Naive thymus-derived CD4-positive, alpha-beta T cell (primary cell): ENCODE measurements at regions of chr17 and their contacts with region 1.

Region 1: GRCh38 chr17:29568331-29569244 is at the start of gene TP53I13:
- DNase-seq: peak; percentile 65 to 90 (median 81)
- ATAC-seq: peak; percentile 81
- H3K4me3 ChIP-seq: peak within 1 kb of the TSS; percentile 89
- H3K4me3 Mint-ChIP-seq: peak within 1 kb of the TSS; percentile 88 to 99 (median 95)
- H3K27ac ChIP-seq: peak within 1 kb of the TSS; percentile 78
- H3K27ac Mint-ChIP-seq: peak within 1 kb of the TSS; percentile 82 to 97 (median 92)
- H3K4me1 ChIP-seq: peaks cover 12 to 30% of the 10 kb centered on the region in 2 donors
- H3K4me1 Mint-ChIP-seq: peaks cover 21 to 42% (median 32%) of the 10 kb centered on the region in 7 donors
- H3K27me3 ChIP-seq: no peaks in the 10 kb centered on the region
- H3K27me3 Mint-ChIP-seq: no peaks in the 10 kb centered on the region
- total RNA-seq, gene TP53I13: 61.6 to 87.5 (median 62.8) TPM

Region 2: DNA sequence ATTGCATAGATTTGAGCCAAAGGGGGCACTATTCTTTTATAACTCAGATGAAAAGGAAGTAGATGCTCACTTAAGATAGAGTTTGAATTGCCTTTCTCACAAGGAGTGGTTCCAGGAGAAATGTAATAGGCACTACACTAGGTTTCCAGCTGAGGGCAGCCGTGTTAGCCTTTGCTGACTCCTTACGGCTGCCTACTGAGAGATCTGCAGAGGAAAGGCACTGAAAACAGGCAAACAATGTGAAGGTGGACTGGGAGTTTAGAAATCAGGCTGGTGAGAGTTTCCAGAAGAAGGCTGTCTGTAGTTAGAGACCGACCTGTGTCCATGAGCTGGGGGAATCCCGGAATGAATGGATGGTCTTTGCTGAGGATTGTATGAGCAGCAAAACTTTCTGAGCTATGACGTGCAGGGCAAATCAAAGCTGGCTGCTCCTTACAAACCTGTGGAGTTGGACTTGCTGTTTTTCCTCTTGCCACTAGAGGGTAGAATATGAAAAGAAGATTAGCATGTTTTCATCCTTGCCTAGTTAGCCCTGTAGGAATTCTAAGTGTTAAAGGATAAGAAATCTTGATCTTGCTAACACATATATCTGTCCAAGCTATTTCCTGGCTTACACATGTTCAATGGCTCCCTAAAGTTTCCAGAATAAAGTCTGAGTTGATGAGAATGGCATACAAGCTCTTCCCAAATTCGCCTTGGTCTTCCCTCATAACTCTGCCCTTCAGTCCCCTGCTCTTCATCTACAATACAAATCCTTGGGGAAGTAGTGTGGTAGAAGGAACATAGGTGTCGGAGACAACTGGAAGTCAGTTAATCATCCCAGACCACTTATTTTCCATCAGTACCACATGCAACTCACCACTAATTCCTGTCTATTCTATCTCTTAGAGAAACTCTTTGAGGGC is 198.5 kb before region 1 on chr17:
- CTCF ChIA-PET with region 1: interaction called, 9 read pairs
- POLR2A ChIA-PET with region 1: no interaction called
- intact Hi-C with region 1: loop called (anchors 1 kb)
- DNase-seq: peak; percentile 25 to 80 (median 67)
- ATAC-seq: peak; percentile 95
- H3K4me3 ChIP-seq: no peak overlapping the region
- H3K4me3 Mint-ChIP-seq: no peak overlapping the region
- H3K27ac ChIP-seq: peak overlapping the region; percentile 63
- H3K27ac Mint-ChIP-seq: no peak overlapping the region
- H3K4me1 ChIP-seq: no peaks in the 10 kb centered on the region
- H3K4me1 Mint-ChIP-seq: no peaks in the 10 kb centered on the region
- H3K27me3 ChIP-seq: no peaks in the 10 kb centered on the region
- H3K27me3 Mint-ChIP-seq: peaks cover 0 to 2% (median 0%) of the 10 kb centered on the region in 5 donors

Region 3: GRCh38 chr17:29389982-29390850 is 178.4 kb before region 1 on chr17 and contains the start of gene TAOK1:
- CTCF ChIA-PET with region 1: no interaction called
- POLR2A ChIA-PET with region 1: interaction called, 4 read pairs
- intact Hi-C with region 1: loop called (anchors 1 kb)
- DNase-seq: peak; percentile 93 to 98 (median 96)
- ATAC-seq: peak; percentile 97
- H3K4me3 ChIP-seq: peak within 1 kb of the TSS; percentile 94
- H3K4me3 Mint-ChIP-seq: peak within 1 kb of the TSS; percentile 95 to 99 (median 98)
- H3K27ac ChIP-seq: peak within 1 kb of the TSS; percentile 98
- H3K27ac Mint-ChIP-seq: peak within 1 kb of the TSS; percentile 92 to 98 (median 97)
- H3K4me1 ChIP-seq: peaks cover 14 to 25% of the 10 kb centered on the region in 2 donors
- H3K4me1 Mint-ChIP-seq: peaks cover 36 to 49% (median 44%) of the 10 kb centered on the region in 7 donors
- H3K27me3 ChIP-seq: no peaks in the 10 kb centered on the region
- H3K27me3 Mint-ChIP-seq: peaks cover 0 to 2% (median 0%) of the 10 kb centered on the region in 5 donors
- total RNA-seq, gene TAOK1: 62.4 to 70.1 (median 66.5) TPM

Region 4: DNA sequence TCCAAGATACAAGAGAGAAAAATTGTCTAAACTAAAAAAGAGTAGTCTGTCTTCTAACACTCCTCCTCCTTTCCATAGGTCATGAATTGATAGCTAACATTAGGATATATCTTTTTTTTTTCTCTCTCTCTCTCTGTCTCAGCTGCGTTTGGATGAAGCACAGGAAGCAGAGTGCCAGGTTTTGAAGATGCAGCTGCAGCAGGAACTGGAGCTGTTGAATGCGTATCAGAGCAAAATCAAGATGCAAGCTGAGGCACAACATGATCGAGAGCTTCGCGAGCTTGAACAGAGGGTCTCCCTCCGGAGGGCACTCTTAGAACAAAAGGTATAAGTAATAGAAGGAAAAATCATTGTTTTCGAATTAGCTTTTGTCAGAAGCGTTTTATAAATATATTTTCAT is 34.6 kb before region 1 on chr17:
- CTCF ChIA-PET with region 1: interaction called, 4 read pairs
- POLR2A ChIA-PET with region 1: no interaction called
- intact Hi-C with region 1: loop called in 1 of 2 experiments (anchors 2 kb)
- DNase-seq: no peak
- ATAC-seq: no peak
- H3K4me3 ChIP-seq: no peak overlapping the region
- H3K4me3 Mint-ChIP-seq: no peak overlapping the region
- H3K27ac ChIP-seq: no peak overlapping the region
- H3K27ac Mint-ChIP-seq: peak overlapping the region in 2 of 9 donors; percentile 14 to 36
- H3K4me1 ChIP-seq: no peaks in the 10 kb centered on the region
- H3K4me1 Mint-ChIP-seq: no peaks in the 10 kb centered on the region
- H3K27me3 ChIP-seq: no peaks in the 10 kb centered on the region
- H3K27me3 Mint-ChIP-seq: no peaks in the 10 kb centered on the region

Region 5: DNA sequence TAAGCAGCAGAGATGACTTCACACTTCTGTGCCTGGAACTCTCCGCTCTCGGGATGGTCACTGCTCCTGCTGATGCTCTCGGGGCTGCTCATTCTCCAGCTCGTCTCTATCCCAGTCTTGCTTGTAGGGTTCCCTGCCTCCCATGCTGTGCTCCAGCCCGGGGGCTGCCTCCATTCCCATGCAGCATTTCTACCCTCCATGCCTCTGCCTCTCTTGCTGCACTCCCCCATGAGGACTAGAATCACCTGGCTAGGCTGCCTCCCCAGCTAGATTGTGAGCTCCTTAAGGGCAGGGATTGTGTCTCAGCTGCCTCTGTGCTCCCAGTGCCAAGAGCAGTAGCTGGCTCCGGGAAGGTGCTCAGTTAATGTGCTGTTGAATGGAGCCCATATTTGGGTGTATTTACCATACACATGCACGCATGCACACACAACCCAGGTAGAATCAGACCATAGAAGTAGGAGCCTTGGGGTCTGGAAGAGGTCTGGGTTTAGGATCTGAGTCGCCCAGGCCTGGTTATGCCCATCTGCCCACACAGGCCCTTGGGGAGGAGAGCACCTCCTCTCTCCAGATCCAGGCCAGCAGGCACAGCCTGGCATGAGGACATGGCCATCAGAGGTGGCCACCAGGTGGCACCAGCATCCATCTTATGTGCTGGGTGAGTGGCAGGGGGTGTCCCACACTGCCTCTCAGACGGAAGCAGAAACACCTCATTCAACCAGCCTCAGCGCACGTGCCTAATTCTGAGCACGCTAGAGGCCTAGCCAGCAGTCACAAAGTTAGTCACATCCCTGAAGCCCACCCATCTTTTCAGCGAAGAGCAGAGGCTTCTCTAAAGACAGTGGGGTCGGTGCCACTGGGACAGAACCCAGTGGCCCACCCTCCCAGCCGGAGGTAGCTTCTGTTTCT is 11.5 kb after region 1 on chr17:
- CTCF ChIA-PET with region 1: interaction called, 12 read pairs
- POLR2A ChIA-PET with region 1: interaction called, 8 read pairs
- intact Hi-C with region 1: loop called in 1 of 2 experiments (anchors 1 kb)
- DNase-seq: peak; percentile 79 to 90 (median 87)
- ATAC-seq: peak; percentile 99
- H3K4me3 ChIP-seq: no peak overlapping the region
- H3K4me3 Mint-ChIP-seq: peak overlapping the region in 2 of 10 donors; percentile 2 to 32
- H3K27ac ChIP-seq: peak overlapping the region; percentile 53
- H3K27ac Mint-ChIP-seq: peak overlapping the region; percentile 7 to 96 (median 81)
- H3K4me1 ChIP-seq: peaks cover 2 to 17% of the 10 kb centered on the region in 2 donors
- H3K4me1 Mint-ChIP-seq: peaks cover 21 to 24% (median 22%) of the 10 kb centered on the region in 7 donors
- H3K27me3 ChIP-seq: no peaks in the 10 kb centered on the region
- H3K27me3 Mint-ChIP-seq: no peaks in the 10 kb centered on the region

Region 6: GRCh38 chr17:29589524-29590410 is 21.2 kb after region 1 on chr17 and contains the start of gene GIT1:
- CTCF ChIA-PET with region 1: interaction called, 6 read pairs
- POLR2A ChIA-PET with region 1: interaction called, 12 read pairs
- intact Hi-C with region 1: loop called (anchors 1 kb)
- DNase-seq: peak; percentile 77 to 88 (median 84)
- ATAC-seq: peak; percentile 93
- H3K4me3 ChIP-seq: peak within 1 kb of the TSS; percentile 72
- H3K4me3 Mint-ChIP-seq: peak within 1 kb of the TSS; percentile 88 to 96 (median 94)
- H3K27ac ChIP-seq: peak within 1 kb of the TSS; percentile 75
- H3K27ac Mint-ChIP-seq: peak within 1 kb of the TSS; percentile 78 to 94 (median 89)
- H3K4me1 ChIP-seq: peaks cover 58 to 65% of the 10 kb centered on the region in 2 donors
- H3K4me1 Mint-ChIP-seq: peaks cover 35 to 73% (median 66%) of the 10 kb centered on the region in 7 donors
- H3K27me3 ChIP-seq: no peaks in the 10 kb centered on the region
- H3K27me3 Mint-ChIP-seq: no peaks in the 10 kb centered on the region
- total RNA-seq, gene GIT1: 42.5 to 76.3 (median 62.4) TPM